WTC11 (cell line): ENCODE measurements at regions of chr19 and their contacts with region 1.

Region 1: GRCh38 chr19:4524808-4525562 is 6.7 kb upstream of the PLIN4 start:
- DNase-seq: peak; percentile 87
- ATAC-seq: peak; percentile 82
- H3K4me3 Mint-ChIP-seq: no peak overlapping the region
- H3K27ac Mint-ChIP-seq: no peak overlapping the region
- H3K4me1 Mint-ChIP-seq: no peaks in the 10 kb centered on the region
- H3K27me3 Mint-ChIP-seq: peaks cover 35% of the 10 kb centered on the region
- CTCF ChIP-seq: peak; percentile 69; the same call in 1 of the 2 replicates

Region 2: GRCh38 chr19:4431808-4432674 is 92.9 kb before region 1 on chr19:
- CTCF ChIA-PET with region 1: no interaction called
- POLR2A ChIA-PET with region 1: no interaction called
- DNase-seq: no peak
- ATAC-seq: 0 out of 2 replicates have a peak, but pooled peaks have one; percentile 10
- H3K4me3 Mint-ChIP-seq: no peak overlapping the region
- H3K27ac Mint-ChIP-seq: no peak overlapping the region
- H3K4me1 Mint-ChIP-seq: no peaks in the 10 kb centered on the region
- H3K27me3 Mint-ChIP-seq: no peaks in the 10 kb centered on the region
- CTCF ChIP-seq: no peak

Region 3: DNA sequence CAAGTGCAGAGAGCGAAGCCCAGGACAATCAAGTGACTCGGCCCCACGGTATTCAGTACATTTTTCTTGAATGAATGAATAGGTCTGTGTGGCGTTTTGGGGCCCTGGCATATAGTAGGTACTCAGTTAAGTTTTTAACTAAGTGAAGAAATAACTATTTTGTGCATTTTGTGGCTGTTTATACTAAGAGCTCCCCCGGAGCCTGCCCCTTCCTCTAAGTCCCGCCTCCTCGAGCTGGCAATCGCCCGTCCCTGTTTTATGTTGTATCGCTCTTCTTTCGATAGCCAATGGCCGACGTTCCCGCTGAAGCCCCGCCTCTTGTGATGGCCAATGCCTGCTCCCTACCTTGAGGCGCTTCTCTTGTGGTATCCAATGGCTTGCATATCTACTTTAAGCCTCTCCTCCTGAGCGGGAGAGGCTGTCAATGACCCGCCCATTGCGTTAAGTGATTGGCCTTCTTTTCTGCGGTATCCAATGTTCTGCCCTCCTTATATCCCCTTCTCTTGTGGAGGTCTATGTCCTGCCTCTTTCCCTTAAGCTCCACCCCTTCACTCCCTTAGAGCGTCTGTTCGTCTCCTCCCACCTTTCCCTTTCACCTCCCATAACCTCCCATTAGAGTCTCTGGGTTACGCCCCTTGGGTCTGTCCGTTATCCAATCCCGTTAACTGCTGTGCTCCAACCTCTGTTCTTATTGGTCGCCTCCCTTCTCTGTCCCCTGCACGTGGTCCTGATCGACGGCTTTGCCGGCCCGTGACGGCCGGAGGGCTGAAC is 53.4 kb before region 1 on chr19:
- CTCF ChIA-PET with region 1: interaction called, 79 read pairs
- POLR2A ChIA-PET with region 1: no interaction called
- DNase-seq: peak; percentile 97
- ATAC-seq: peak; percentile 88
- H3K4me3 Mint-ChIP-seq: no peak overlapping the region
- H3K27ac Mint-ChIP-seq: no peak overlapping the region
- H3K4me1 Mint-ChIP-seq: peaks cover 10% of the 10 kb centered on the region
- H3K27me3 Mint-ChIP-seq: no peaks in the 10 kb centered on the region
- CTCF ChIP-seq: no peak

Region 4: DNA sequence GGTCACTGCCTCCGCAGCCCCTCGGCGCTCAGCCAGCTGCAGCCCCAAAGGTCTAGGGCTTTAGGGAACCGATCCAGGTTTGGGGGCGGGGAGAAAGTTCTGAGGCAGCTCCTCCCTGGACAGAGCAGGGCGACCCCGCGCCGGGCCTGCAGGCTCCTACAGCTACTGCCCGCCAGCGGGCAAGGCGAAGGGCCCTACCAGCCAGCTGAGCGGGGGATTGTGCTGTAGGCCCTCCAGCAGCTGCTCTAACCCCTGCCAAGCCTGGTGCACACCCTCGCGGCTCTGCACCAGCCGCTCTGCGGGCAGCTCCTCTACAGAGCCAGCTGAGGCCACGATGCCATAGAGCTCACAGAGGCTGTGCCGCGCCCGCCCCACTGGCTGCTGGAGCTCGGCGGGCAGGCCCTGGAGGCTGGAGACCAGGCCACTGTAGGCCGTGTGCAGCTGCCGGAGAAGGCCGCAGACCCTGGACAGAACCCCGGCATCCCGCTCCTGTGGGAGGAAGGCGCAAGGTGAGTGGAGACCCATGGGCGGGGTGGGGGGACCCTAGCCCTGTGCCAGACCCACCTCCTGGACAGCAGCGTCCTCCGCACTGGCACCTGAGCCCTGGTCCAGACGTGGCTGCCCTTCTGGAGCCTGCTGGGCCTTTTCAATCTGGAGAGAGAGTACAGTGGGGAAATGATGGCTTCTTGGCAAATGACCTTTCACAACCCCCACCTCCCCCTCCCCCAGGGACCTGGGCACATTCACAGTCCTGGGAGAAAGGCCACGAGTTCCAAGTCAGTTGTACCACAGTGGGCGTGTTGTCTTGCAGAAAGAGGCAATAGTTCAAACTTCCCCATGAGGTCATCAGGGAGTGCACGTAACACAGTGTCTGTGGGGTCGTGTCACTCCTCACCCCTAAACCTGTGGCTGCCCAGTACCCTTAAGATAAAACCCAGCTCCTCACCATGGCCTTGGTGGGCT is 20.4 kb before region 1 on chr19:
- CTCF ChIA-PET with region 1: interaction called, 38 read pairs
- POLR2A ChIA-PET with region 1: no interaction called
- DNase-seq: no peak
- ATAC-seq: no peak
- H3K4me3 Mint-ChIP-seq: no peak overlapping the region
- H3K27ac Mint-ChIP-seq: no peak overlapping the region
- H3K4me1 Mint-ChIP-seq: no peaks in the 10 kb centered on the region
- H3K27me3 Mint-ChIP-seq: peaks cover 25% of the 10 kb centered on the region
- CTCF ChIP-seq: no peak

Region 5: DNA sequence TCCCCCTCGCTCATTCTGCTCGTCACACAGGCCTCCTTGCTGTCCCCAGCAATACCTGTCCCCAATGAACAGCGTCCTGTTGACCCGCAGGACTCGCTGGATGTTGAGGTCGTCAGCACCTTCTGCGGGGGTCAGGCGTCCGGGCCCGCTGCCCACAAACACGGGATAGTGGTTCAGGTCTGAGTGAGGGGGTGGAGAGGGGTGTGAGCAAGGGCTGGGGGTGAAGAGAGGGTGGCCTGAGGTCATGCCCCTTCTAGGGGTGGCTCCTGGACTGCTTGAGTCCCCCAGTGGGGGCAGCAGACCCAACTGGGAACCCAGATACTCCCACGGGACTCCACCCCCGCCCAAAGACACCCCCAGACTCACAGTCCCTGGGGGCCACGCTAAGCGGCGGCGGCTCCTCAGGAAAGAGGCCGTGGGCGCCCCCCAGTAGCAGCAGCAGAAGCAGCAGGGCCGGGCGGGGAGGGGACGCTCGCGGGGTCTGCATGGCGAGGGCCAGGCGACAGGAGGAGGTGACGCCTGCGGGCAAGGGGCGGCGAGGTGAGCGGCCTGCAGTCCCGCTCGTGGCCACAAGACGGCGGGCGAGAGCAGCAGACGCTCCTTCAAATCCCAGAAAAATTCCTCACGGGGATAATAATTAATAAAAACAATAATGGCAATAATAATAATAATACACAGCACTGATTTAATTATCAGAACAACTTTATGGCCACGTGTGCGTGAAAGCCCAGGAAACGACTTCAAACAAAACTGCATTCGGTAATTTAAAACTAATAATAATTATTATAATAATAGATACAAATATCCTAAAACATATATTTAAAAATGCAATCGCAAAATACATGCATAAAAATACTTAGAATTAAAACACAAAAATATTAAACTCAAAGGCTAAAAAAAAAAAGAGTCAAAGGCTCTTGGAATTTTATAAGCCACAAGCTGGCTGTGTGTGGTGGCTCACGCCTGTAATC is 33.3 kb after region 1 on chr19:
- CTCF ChIA-PET with region 1: interaction called, 15 read pairs
- POLR2A ChIA-PET with region 1: no interaction called
- DNase-seq: peak; percentile 78
- ATAC-seq: peak; percentile 12; the same call in 1 of the 2 replicates
- H3K4me3 Mint-ChIP-seq: no peak overlapping the region
- H3K27ac Mint-ChIP-seq: no peak overlapping the region
- H3K4me1 Mint-ChIP-seq: peaks cover 9% of the 10 kb centered on the region
- H3K27me3 Mint-ChIP-seq: peaks cover 2% of the 10 kb centered on the region; the same call in 1 of the 2 replicates
- CTCF ChIP-seq: peak; percentile 100

Region 6: DNA sequence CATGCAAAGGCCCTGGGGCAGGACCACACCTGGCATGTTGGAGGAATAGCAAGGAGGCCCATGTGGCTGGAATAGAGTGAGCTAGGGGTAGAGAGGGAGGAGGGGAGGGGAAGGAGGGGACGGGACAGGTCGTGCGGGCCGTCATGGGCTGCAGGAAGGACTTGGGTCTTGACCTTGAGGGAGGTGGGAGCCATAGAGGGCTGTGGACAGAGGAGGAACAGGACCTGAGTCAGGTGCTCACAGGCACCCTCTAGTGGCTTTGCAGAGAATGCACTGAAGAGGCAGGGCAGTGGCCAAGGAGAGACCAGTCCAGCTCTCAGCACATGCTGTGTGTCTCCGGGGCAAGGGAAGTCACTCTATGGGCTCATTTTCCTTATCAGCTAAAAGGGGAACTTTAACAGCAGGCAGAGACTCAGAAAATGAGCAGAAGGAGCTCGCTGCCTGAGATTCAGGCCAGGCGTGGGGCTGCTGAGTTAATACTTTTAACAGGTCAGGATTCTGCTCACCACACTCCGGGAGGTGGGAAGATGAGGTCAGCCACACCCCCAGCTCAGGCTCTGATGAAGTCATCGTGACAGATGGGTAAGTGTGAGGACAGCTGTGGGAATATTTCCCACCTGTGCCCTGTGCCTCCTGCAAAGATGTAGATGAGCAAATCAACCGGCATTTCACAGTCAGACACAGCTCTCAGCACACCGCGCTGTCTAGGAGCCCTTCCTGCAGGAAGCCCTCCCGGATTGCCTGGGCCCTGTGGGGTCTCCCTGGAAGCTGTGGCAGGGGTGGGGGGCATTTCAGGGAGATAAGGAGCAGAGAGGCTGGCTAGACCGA is 108.4 kb after region 1 on chr19:
- CTCF ChIA-PET with region 1: interaction called, 85 read pairs
- POLR2A ChIA-PET with region 1: no interaction called
- DNase-seq: peak; percentile 80
- ATAC-seq: peak; percentile 68
- H3K4me3 Mint-ChIP-seq: 0 out of 2 replicates have a peak overlapping the region, but pooled peaks have one; percentile 8
- H3K27ac Mint-ChIP-seq: no peak overlapping the region
- H3K4me1 Mint-ChIP-seq: peaks cover 6% of the 10 kb centered on the region
- H3K27me3 Mint-ChIP-seq: peaks cover 48% of the 10 kb centered on the region
- CTCF ChIP-seq: peak; percentile 90

Region 7: DNA sequence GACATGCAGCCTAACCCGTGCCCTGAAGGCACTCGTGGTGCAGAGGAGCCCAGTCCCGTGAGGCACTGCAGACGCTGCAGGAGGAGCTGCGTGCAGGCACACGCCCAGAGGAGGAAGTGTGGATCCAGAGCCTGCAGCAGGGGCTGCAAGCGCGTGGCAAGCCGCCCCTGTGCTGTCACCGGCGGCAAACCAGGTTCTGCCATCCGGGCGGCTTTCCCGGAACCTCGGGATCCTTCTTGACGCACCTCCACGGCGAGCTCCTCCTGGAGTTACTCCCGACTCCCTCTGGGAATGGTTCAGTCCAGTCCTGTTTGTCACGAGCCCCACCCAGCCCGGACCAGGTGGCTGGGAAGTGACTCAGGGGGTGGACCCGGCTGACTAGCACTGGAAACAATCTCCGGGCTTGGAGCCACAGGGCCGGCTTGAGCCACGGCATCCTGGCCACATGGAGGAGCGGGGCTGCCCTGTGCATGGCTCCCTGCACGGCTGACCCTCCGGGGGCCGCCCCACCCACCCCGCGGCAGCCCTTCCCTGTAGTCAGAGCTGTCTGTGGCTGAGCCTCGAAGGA is 188.5 kb after region 1 on chr19:
- CTCF ChIA-PET with region 1: no interaction called
- POLR2A ChIA-PET with region 1: no interaction called
- DNase-seq: no peak
- ATAC-seq: no peak
- H3K4me3 Mint-ChIP-seq: no peak overlapping the region
- H3K27ac Mint-ChIP-seq: no peak overlapping the region
- H3K4me1 Mint-ChIP-seq: no peaks in the 10 kb centered on the region
- H3K27me3 Mint-ChIP-seq: no peaks in the 10 kb centered on the region
- CTCF ChIP-seq: no peak